ENCODE measurements at regions of chr20 and their contacts with region 1.

Region 1: GRCh38 chr20:45934586-45935415 is at the start of gene PCIF1:
- DNase-seq: peak; percentile 88 to 98
- H3K4me3 ChIP-seq: peak within 1 kb of the TSS; percentile 73
- H3K27ac ChIP-seq: peak within 1 kb of the TSS; percentile 93
- H3K4me1 ChIP-seq: peaks cover 11% of the 10 kb centered on the region
- H3K27me3 ChIP-seq: no peaks in the 10 kb centered on the region
- CTCF ChIP-seq: no peak
- total RNA-seq, gene PCIF1: 35.3 and 35.6 TPM in 2 replicates

Region 2: DNA sequence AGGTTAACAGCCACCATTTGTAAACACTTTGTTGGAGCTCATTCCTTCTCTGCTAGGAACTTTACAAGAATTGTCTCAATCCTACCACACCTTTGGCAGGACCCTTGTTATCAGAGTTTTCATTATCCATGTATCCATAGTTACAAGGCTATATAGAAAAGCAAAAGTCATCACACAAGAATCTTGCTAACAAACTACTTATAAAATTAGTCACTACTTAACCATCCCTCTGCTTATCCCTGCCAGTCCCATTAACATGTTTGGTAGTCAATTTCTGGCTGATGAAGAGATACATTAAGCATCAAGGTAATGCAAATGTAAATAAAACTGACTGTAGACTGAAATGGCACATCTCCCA is 67.0 kb before region 1 on chr20:
- CTCF ChIA-PET with region 1: no interaction called
- POLR2A ChIA-PET with region 1: interaction called, 17 read pairs
- intact Hi-C with region 1: no loop called
- DNase-seq: peak in 1 of 2 experiments; percentile 93
- H3K4me3 ChIP-seq: no peak overlapping the region
- H3K27ac ChIP-seq: peak overlapping the region; percentile 41
- H3K4me1 ChIP-seq: peaks cover 28% of the 10 kb centered on the region
- H3K27me3 ChIP-seq: no peaks in the 10 kb centered on the region
- CTCF ChIP-seq: no peak

Region 3: DNA sequence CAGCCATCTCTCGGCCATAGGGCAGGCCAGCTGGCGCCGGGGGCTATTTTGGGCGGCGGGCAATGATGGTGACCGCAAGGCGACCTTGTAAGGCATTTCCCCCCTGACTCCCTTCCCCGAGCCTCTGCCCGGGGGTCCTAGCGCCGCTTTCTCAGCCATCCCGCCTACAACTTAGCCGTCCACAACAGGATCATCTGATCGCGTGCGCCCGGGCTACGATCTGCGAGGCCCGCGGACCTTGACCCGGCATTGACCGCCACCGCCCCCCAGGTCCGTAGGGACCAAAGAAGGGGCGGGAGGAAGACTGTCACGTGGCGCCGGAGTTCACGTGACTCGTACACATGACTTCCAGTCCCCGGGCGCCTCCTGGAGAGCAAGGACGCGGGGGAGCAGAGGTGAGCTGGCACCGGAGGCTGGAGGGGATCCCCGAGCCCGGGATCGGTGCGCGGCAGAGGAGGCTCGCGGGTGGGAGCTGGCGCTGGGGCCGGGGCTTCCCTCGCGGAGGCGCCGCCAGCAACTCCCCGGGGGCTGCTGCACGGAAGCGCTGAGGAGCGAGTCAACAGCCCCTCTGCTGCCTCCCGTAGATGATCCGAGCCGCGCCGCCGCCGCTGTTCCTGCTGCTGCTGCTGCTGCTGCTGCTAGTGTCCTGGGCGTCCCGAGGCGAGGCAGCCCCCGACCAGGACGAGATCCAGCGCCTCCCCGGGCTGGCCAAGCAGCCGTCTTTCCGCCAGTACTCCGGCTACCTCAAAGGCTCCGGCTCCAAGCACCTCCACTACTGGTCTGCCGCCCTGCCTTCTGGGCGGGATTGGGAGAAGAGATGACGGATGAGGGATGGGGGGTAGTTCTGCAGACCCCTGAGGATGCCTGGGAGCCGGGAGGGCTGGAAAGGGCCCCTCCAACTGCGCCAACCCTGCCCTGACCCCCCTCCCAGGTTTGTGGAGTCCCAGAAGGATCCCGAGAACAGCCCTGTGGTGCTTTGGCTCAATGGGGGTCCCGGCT is 43.5 kb before region 1 on chr20 and contains the starts of genes CTSA and NEURL2:
- CTCF ChIA-PET with region 1: interaction called, 7 read pairs
- POLR2A ChIA-PET with region 1: interaction called, 8 read pairs
- intact Hi-C with region 1: loop called (anchors 1 kb)
- DNase-seq: peak; percentile 81 to 90
- H3K4me3 ChIP-seq: peak within 1 kb of the TSS; percentile 82
- H3K27ac ChIP-seq: no peak within 1 kb of the TSS
- H3K4me1 ChIP-seq: peaks cover 14% of the 10 kb centered on the region; the same call in 1 of the 2 replicates
- H3K27me3 ChIP-seq: no peaks in the 10 kb centered on the region
- CTCF ChIP-seq: no peak; the same call in 1 of the 2 replicates
- total RNA-seq, gene CTSA: 123 and 132 TPM in 2 replicates
- total RNA-seq, gene NEURL2: 6.5 and 9.2 TPM in 2 replicates

Region 4: DNA sequence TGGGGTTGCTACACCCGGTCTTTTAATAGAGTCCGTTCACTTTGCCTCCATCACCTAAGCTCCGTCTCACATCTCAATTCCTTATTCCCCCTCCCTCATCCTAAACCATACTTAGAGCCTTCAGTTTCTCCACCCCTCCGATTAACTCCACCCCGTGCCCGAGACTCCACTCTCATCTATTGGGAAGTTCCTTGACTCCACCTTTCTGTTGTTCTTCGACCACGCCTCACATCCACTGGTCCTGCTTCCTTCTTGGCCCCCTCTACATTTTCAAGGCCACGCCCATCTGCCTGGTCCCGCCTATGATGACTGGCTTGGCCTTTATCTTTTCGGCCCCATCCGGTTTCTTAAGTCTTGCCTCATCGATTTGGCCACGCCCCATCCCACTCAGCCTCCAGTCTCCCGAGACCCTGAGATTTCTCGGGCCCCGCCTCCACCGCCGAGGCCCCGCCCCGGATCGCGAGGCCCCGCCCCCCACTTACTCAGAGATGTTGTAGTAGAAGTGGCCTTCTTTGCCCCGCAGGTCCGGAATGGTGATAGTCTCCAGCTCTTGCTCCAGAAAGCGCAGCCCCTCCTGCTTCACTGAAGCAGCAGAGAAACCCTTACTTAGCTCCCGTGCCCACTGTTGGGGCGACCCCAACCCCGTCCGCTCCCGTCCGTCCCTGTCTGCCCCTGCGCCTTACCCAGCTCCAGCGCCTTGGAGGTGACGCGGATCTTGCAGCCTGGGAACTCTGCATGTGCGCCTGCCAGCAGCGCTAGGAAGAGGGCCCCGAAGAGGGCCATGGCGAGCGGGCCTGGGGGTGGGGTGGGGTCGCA is 23.9 kb before region 1 on chr20:
- CTCF ChIA-PET with region 1: no interaction called
- POLR2A ChIA-PET with region 1: interaction called, 17 read pairs
- intact Hi-C with region 1: loop called (anchors 2 kb)
- DNase-seq: peak; percentile 98 to 100
- H3K4me3 ChIP-seq: peak overlapping the region; percentile 63
- H3K27ac ChIP-seq: peak overlapping the region; percentile 38
- H3K4me1 ChIP-seq: peaks cover 22% of the 10 kb centered on the region
- H3K27me3 ChIP-seq: no peaks in the 10 kb centered on the region
- CTCF ChIP-seq: no peak

Region 5: GRCh38 chr20:46363800-46364634 is 429.2 kb after region 1 on chr20:
- CTCF ChIA-PET with region 1: no interaction called
- POLR2A ChIA-PET with region 1: interaction called, 16 read pairs
- intact Hi-C with region 1: no loop called
- DNase-seq: peak; percentile 87 to 88
- H3K4me3 ChIP-seq: peak overlapping the region; percentile 90
- H3K27ac ChIP-seq: peak overlapping the region; percentile 82
- H3K4me1 ChIP-seq: peaks cover 27% of the 10 kb centered on the region
- H3K27me3 ChIP-seq: no peaks in the 10 kb centered on the region
- CTCF ChIP-seq: no peak

Region 6: DNA sequence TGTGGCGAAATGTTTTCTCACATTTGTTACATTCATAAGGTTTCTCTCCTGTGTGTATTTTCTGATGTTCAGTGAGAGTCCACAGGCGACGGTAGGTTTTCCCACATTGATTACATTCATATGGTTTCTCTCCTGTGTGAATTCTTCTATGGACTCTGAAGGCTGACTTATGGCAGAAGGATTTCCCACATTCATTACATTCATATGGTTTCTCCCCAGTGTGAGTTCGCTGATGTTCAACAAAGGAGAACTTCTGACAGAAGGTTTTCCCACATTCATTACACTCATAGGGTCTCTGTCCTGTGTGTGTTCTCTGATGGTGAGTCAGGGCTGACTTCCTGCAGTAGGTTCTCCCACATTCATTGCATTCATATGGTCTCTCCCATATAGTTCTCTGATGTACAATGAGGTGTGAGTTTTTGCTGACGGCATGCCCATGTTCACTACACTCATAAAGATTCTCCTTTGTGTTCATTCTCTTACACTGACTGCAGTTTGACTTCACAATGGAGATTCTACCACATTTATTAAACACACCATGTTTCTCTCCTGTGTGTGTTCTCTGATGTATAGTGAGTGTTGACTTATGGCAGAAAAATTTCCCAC is 566.6 kb after region 1 on chr20:
- CTCF ChIA-PET with region 1: no interaction called
- POLR2A ChIA-PET with region 1: no interaction called
- intact Hi-C with region 1: no loop called
- DNase-seq: peak in 1 of 2 experiments; percentile 2
- H3K4me3 ChIP-seq: no peak overlapping the region
- H3K27ac ChIP-seq: no peak overlapping the region
- H3K4me1 ChIP-seq: no peaks in the 10 kb centered on the region
- H3K27me3 ChIP-seq: peaks cover 38% of the 10 kb centered on the region
- CTCF ChIP-seq: no peak

Measured in PC-9 (cell line).